ENCODE measurements at regions of chr3 and their contacts with region 1.

Region 1: GRCh38 chr3:36876181-36876936 is 68.5 kb downstream of the TRANK1 start:
- DNase-seq: peak; percentile 66 to 81 (median 74)
- H3K4me3 ChIP-seq: peak overlapping the region; percentile 6 to 24
- H3K4me3 Mint-ChIP-seq: peak overlapping the region; percentile 63 to 85 (median 78)
- H3K27ac ChIP-seq: peak overlapping the region; percentile 71
- H3K27ac Mint-ChIP-seq: peak overlapping the region; percentile 83 to 97 (median 95)
- H3K4me1 ChIP-seq: peaks cover 48% of the 10 kb centered on the region
- H3K4me1 Mint-ChIP-seq: peaks cover 50 to 65% (median 54%) of the 10 kb centered on the region in 4 donors
- H3K27me3 ChIP-seq: no peaks in the 10 kb centered on the region
- H3K27me3 Mint-ChIP-seq: no peaks in the 10 kb centered on the region

Region 2: GRCh38 chr3:36597422-36597821 is 278.9 kb before region 1 on chr3:
- CTCF ChIA-PET with region 1: no interaction called
- POLR2A ChIA-PET with region 1: no interaction called
- intact Hi-C with region 1: no loop called
- DNase-seq: no peak
- H3K4me3 ChIP-seq: no peak overlapping the region
- H3K4me3 Mint-ChIP-seq: no peak overlapping the region
- H3K27ac ChIP-seq: no peak overlapping the region
- H3K27ac Mint-ChIP-seq: no peak overlapping the region
- H3K4me1 ChIP-seq: no peaks in the 10 kb centered on the region
- H3K4me1 Mint-ChIP-seq: no peaks in the 10 kb centered on the region
- H3K27me3 ChIP-seq: no peaks in the 10 kb centered on the region
- H3K27me3 Mint-ChIP-seq: peaks cover 9 to 11% of the 10 kb centered on the region in 2 donors

Region 3: GRCh38 chr3:36893137-36893557 is 16.8 kb after region 1 on chr3:
- CTCF ChIA-PET with region 1: interaction called, 10 read pairs
- POLR2A ChIA-PET with region 1: interaction called, 22 read pairs
- intact Hi-C with region 1: loop called (anchors 2 kb)
- DNase-seq: peak; percentile 40 to 85 (median 56)
- H3K4me3 ChIP-seq: no peak overlapping the region
- H3K4me3 Mint-ChIP-seq: peak overlapping the region in 4 of 8 donors; percentile 1 to 65 (median 56)
- H3K27ac ChIP-seq: peak overlapping the region; percentile 43
- H3K27ac Mint-ChIP-seq: peak overlapping the region; percentile 79 to 97 (median 93)
- H3K4me1 ChIP-seq: peaks cover 46% of the 10 kb centered on the region
- H3K4me1 Mint-ChIP-seq: peaks cover 40 to 74% (median 55%) of the 10 kb centered on the region in 4 donors
- H3K27me3 ChIP-seq: no peaks in the 10 kb centered on the region
- H3K27me3 Mint-ChIP-seq: no peaks in the 10 kb centered on the region

Measured in CD4-positive, alpha-beta memory T cell (primary cell).